ENCODE measurements at regions of chr7 and their contacts with region 1.

Region 1: GRCh38 chr7:150787321-150788281 is 12.6 kb downstream of the TMEM176B start:
- DNase-seq: peak; percentile 75
- H3K4me3 ChIP-seq: no peak overlapping the region
- H3K27ac ChIP-seq: peak overlapping the region; percentile 47 to 100; a peak in 3 of 4 replicates
- H3K4me1 ChIP-seq: peaks cover 19 to 61% of the 10 kb centered on the region in 2 experiments; a peak in 3 of 4 replicates
- H3K27me3 ChIP-seq: no peaks in the 10 kb centered on the region
- CTCF ChIP-seq: no peak
- EP300 ChIP-seq: peak; percentile 31 to 96; a peak in 3 of 4 replicates
- RAD21 ChIP-seq: peak; percentile 59

Region 2: DNA sequence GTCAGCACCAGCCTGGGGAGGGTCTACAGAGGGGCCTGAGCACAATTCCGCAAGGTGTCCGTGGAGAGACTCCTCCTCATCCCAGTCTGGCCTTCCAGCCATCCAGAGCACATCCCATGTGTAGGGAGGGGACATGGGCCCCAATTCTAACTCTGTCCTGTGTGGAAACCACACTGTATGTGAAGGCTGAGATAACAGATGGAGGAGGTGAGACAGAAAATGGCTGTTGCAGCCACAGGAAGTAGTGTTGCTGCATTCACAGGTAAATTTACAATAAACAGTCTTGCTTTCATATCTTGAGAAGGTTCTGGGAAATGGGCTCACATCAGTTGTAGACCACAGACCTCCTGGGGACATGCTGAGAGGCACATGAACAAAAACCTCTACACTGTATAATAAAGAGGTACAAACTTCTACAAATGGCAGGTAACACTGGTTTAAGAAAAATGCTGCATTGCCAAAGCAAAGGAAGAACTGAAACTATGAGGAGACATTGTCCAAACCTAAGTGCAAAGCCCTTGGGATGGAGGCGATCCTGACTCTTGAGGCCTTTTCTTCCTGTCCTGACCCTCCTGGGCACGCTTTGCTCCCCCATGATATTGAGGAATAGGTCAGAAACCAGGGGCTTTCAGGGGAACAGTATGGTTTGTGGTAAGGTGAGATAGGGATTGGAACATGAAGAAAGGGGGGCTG is 123.7 kb before region 1 on chr7:
- CTCF ChIA-PET with region 1: no interaction called
- POLR2A ChIA-PET with region 1: no interaction called
- DNase-seq: no peak
- H3K4me3 ChIP-seq: no peak overlapping the region
- H3K27ac ChIP-seq: no peak overlapping the region
- H3K4me1 ChIP-seq: no peaks in the 10 kb centered on the region
- H3K27me3 ChIP-seq: peaks cover 5% of the 10 kb centered on the region; the same call in 1 of the 2 replicates
- CTCF ChIP-seq: no peak
- EP300 ChIP-seq: no peak
- RAD21 ChIP-seq: no peak

Region 3: GRCh38 chr7:150860291-150860977 is 72.8 kb after region 1 on chr7:
- CTCF ChIA-PET with region 1: interaction called, 13 read pairs
- POLR2A ChIA-PET with region 1: interaction called, 3 read pairs
- DNase-seq: peak; percentile 58
- H3K4me3 ChIP-seq: no peak overlapping the region
- H3K27ac ChIP-seq: no peak overlapping the region
- H3K4me1 ChIP-seq: peaks cover 0 to 6% of the 10 kb centered on the region in 2 experiments; a peak in 1 of 4 replicates
- H3K27me3 ChIP-seq: no peaks in the 10 kb centered on the region
- CTCF ChIP-seq: no peak
- EP300 ChIP-seq: no peak
- RAD21 ChIP-seq: peak; percentile 62

Region 4: GRCh38 chr7:150867605-150868004 is 80.0 kb after region 1 on chr7:
- CTCF ChIA-PET with region 1: interaction called, 10 read pairs
- POLR2A ChIA-PET with region 1: no interaction called
- DNase-seq: no peak
- H3K4me3 ChIP-seq: no peak overlapping the region
- H3K27ac ChIP-seq: no peak overlapping the region
- H3K4me1 ChIP-seq: peaks cover 0 to 4% of the 10 kb centered on the region in 2 experiments; a peak in 1 of 4 replicates
- H3K27me3 ChIP-seq: no peaks in the 10 kb centered on the region
- CTCF ChIP-seq: no peak
- EP300 ChIP-seq: no peak
- RAD21 ChIP-seq: no peak

Region 5: GRCh38 chr7:150903606-150904005 is 116.0 kb after region 1 on chr7:
- CTCF ChIA-PET with region 1: interaction called, 72 read pairs
- POLR2A ChIA-PET with region 1: interaction called, 13 read pairs
- DNase-seq: peak; percentile 40
- H3K4me3 ChIP-seq: no peak overlapping the region
- H3K27ac ChIP-seq: peak overlapping the region in 1 of 2 experiments; percentile 12; a peak in 1 of 4 replicates
- H3K4me1 ChIP-seq: peaks cover 11 to 35% of the 10 kb centered on the region in 2 experiments; a peak in 3 of 4 replicates
- H3K27me3 ChIP-seq: no peaks in the 10 kb centered on the region
- CTCF ChIP-seq: no peak
- EP300 ChIP-seq: peak in 1 of 2 experiments; percentile 81; a peak in 2 of 4 replicates
- RAD21 ChIP-seq: no peak

Region 6: DNA sequence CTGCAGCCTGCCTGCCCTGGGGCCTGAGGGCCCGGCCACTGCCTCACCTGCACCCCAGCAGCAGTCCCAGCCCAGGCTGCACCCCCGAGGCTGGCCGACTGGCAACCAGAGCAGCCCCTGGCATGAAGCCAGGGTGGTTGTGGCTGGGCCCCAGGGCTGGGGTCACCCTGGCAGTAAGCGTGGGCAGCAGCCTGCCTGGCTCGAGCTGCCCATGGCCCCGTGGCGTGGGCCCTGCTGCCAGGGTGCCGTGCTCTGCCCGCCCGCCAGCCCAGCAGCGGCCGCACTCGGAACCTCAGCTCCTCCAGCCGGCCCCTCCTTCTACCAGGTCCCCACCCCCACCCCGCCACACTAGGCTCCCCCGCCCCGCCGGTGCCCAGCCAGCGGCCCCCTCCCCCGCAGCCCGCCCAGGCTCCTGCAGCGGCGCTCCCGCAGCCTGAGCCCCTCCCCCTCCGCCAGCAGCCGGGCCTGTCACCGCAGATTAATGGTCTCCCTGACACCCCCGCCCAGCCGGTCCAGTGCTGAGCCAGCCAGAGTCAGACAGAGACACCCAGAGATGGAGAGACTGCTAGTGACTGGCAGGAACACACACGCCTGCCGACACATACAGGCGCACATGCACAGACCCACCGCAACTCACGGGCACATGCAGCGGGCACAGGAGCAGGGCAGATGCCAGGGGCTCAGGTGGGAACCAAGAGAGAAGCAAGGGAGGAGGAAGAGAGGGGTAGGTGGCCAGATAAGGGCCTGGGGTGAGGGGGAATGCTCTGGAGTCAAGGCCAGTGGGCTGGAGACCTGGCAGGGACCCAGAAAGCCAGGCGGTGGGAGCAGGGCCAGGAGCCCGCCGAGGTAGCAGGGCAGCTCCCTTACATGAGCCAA is 168.2 kb after region 1 on chr7:
- CTCF ChIA-PET with region 1: interaction called, 67 read pairs
- POLR2A ChIA-PET with region 1: interaction called, 14 read pairs
- DNase-seq: peak; percentile 97
- H3K4me3 ChIP-seq: peak overlapping the region in 1 of 2 experiments; percentile 45; a peak in 2 of 4 replicates
- H3K27ac ChIP-seq: peak overlapping the region in 1 of 2 experiments; percentile 94; a peak in 3 of 4 replicates
- H3K4me1 ChIP-seq: peaks cover 0 to 85% of the 10 kb centered on the region in 2 experiments; a peak in 2 of 4 replicates
- H3K27me3 ChIP-seq: peaks cover 15% of the 10 kb centered on the region; the same call in 1 of the 2 replicates
- CTCF ChIP-seq: no peak
- EP300 ChIP-seq: peak in 1 of 2 experiments; percentile 12; a peak in 1 of 4 replicates
- RAD21 ChIP-seq: peak; percentile 3; the same call in 1 of the 2 replicates

Region 7: GRCh38 chr7:150974468-150975391 is 187.1 kb after region 1 on chr7:
- CTCF ChIA-PET with region 1: interaction called, 24 read pairs
- POLR2A ChIA-PET with region 1: interaction called, 15 read pairs
- DNase-seq: peak; percentile 82
- H3K4me3 ChIP-seq: peak overlapping the region in 1 of 2 experiments; percentile 37; a peak in 2 of 4 replicates
- H3K27ac ChIP-seq: peak overlapping the region in 1 of 2 experiments; percentile 100; a peak in 3 of 4 replicates
- H3K4me1 ChIP-seq: peaks cover 0 to 90% of the 10 kb centered on the region in 2 experiments; a peak in 2 of 4 replicates
- H3K27me3 ChIP-seq: peaks cover 71% of the 10 kb centered on the region
- CTCF ChIP-seq: peak; percentile 36
- EP300 ChIP-seq: no peak
- RAD21 ChIP-seq: peak; percentile 38; the same call in 1 of the 2 replicates

Region 8: DNA sequence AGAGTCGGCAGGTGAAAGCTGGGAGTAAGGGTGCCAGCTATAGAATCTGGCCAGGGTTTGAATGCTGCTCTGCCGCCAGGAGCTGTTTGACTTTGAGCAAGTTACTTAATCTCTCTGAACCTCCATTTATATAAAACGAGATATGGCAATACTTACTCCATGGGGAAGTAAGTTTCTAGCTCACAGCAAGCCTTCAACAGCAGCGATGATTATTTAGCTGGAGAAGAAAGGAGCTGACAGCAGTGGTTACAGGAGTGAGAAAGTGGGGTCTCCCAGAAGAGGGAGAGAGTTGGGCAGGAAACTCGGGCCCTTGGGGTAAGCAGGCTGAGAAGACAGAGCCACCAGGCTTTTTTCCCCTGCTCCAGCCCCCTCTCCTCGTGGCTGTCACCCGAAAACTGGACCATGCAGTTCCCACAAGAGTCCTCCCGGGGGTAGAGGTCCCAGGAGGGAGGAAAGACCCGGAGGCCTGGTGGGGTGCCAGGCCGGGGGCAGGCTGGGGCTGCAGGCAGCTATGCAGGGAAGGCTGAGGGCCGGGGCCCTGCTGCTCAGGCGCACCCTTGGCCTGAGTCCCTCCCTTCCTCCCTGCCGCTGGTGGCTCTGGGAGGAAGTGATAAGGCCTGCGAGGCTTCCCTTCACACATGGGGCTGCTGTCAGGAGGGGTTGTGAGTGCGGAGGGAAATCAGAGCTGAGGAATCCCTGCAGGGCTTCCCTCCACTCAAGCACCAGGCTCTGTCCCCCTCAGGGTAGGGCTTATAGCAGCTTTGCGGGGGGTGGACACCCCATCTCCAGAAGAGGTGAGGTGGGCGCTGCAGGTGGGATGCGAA is 206.8 kb after region 1 on chr7:
- CTCF ChIA-PET with region 1: interaction called, 12 read pairs
- POLR2A ChIA-PET with region 1: no interaction called
- DNase-seq: peak; percentile 83
- H3K4me3 ChIP-seq: no peak overlapping the region
- H3K27ac ChIP-seq: peak overlapping the region in 1 of 2 experiments; percentile 55; a peak in 1 of 4 replicates
- H3K4me1 ChIP-seq: peaks cover 0 to 20% of the 10 kb centered on the region in 2 experiments; a peak in 2 of 4 replicates
- H3K27me3 ChIP-seq: peaks cover 2% of the 10 kb centered on the region; the same call in 1 of the 2 replicates
- CTCF ChIP-seq: no peak
- EP300 ChIP-seq: no peak
- RAD21 ChIP-seq: no peak

Region 9: GRCh38 chr7:151157645-151158329 is 370.2 kb after region 1 on chr7:
- CTCF ChIA-PET with region 1: no interaction called
- POLR2A ChIA-PET with region 1: no interaction called
- DNase-seq: no peak
- H3K4me3 ChIP-seq: no peak overlapping the region
- H3K27ac ChIP-seq: no peak overlapping the region
- H3K4me1 ChIP-seq: no peaks in the 10 kb centered on the region
- H3K27me3 ChIP-seq: peaks cover 18% of the 10 kb centered on the region; the same call in 1 of the 2 replicates
- CTCF ChIP-seq: no peak
- EP300 ChIP-seq: no peak
- RAD21 ChIP-seq: no peak